Heart right ventricle (tissue), 16 donors: ENCODE measurements at regions of chr1 and their contacts with region 1.

Region 1: DNA sequence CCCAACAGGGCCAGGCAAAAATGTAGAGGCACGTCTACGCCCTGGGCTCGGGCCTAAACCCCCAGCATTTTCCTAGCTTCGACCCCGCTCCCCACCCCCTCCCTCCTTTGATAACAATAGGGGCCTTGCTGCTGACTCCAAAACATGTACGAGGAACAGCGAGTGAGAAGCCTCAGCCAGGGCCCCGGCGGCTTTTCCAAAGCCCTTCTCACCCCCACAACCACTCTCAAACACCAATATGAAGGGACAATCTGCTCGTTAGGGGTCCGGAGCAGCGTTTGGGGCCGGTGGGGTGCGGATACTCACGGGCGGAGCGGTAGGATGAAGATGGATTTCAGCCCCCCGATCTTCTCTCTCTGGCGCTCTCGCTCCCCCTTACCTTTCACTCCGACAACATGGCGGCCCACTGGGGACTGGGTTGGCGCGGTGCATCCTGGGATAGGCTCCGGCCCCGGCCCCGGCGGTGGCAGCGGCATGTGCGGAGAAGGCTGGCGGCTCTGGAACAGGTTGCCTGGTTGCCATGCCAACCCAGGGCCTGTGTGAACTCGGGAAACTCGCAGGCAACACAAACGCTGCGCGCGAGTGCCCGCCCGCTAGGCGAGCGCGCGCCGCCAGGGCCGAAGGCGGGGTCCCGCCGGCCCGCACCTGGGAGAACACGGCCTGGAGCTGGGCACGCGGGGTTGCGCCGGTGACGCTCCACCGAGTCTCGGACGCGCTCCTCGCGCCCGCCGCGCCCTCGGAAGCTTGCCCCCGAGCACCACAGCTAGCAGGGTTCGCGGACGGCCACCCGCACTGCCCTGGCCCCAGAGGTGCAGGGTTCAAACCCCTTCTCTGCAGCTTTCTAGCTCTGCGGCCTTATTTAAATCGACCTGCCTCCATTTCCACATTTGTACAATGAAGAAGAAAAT is at the start of gene PUM1:
- DNase-seq: peak; percentile 96 to 97
- ATAC-seq: peak; percentile 99 to 100 (median 100)
- H3K4me3 ChIP-seq: peak within 1 kb of the TSS; percentile 46 to 78 (median 68)
- H3K27ac ChIP-seq: peak within 1 kb of the TSS; percentile 79 to 97 (median 91)
- H3K4me1 ChIP-seq: peaks cover 0 to 38% (median 35%) of the 10 kb centered on the region in 9 donors
- H3K27me3 ChIP-seq: no peaks in the 10 kb centered on the region
- CTCF ChIP-seq: peak in 3 of 9 donors; percentile 7 to 19 (median 18)
- total RNA-seq, gene PUM1: 69.7 to 91.2 (median 82.9) TPM

Region 2: GRCh38 chr1:30966690-30967369 is 98.7 kb before region 1 on chr1:
- intact Hi-C with region 1: loop called in 4 of 10 experiments (anchors 10 kb)
- DNase-seq: no peak
- ATAC-seq: peak in 5 of 8 donors; percentile 30 to 46 (median 41)
- H3K4me3 ChIP-seq: no peak overlapping the region
- H3K27ac ChIP-seq: peak overlapping the region in 5 of 10 donors; percentile 68 to 82 (median 75)
- H3K4me1 ChIP-seq: peaks cover 8 to 64% (median 47%) of the 10 kb centered on the region in 9 donors
- H3K27me3 ChIP-seq: no peaks in the 10 kb centered on the region
- CTCF ChIP-seq: no peak

Region 3: DNA sequence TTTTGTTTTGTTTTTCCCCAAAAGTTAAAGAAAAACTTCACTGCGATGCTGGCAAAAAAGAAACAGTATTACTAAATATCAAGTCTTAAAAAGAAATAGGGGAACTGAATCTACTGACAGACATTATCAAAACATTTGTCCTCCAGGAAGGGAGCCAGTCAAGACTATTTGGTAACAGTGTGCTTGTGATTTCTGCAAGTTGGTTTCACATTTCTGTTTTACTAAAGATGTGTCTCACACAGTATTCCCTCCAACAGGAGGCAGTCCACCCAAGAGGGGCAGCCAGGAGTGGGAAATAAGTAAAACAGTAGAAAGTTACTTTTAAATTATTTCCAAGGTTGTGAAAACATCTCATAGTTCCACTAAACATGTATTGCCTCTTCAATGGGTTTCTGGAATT is 82.6 kb before region 1 on chr1:
- intact Hi-C with region 1: loop called in 1 of 10 experiments (anchors 10 kb)
- DNase-seq: no peak
- ATAC-seq: peak in 6 of 8 donors; percentile 32 to 66 (median 49)
- H3K4me3 ChIP-seq: no peak overlapping the region
- H3K27ac ChIP-seq: peak overlapping the region in 4 of 10 donors; percentile 7 to 83 (median 22)
- H3K4me1 ChIP-seq: peaks cover 4 to 59% (median 53%) of the 10 kb centered on the region in 9 donors
- H3K27me3 ChIP-seq: no peaks in the 10 kb centered on the region
- CTCF ChIP-seq: peak in 4 of 9 donors; percentile 11 to 27 (median 18)

Region 4: DNA sequence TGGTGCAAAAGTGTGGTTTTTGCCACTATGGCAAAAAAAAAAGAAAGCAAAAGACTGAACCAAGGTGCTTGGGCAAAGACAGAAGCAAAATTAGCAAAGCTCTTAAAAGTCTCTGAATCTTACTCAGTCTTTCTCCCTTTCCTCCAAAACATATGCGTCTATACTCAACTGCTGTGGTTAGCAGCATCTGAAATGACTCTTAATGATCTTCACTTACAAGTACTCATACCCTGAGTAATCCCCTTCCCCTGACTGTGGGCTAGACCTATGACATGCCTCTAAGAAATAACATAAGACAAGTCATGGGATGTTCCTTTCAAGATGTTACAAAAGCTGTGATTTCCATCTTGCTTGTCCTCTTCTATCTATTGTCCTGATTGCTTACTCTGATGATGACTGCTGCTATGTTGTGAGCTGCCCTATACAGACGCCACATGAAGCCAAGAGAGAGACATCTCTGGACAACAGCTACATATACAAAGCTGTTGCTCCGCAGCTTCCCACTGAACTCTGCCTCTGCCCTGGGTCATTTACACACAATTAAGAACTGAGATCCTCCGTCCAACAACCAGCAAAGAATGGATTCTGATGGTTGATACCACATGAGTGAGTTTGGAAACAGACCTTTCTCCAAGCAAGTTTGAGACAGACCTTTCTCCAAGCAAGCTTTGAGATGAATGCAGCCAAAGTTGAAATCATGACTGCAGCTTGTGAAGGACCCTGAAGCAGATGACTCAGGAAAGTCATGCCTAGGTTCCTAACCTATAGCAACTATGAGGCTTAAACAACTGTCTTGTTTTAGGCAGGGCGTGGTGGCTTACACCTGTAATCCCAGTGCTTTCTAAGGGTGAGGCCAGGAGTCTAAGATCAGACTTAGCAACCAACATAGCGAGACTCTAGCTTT is 55.2 kb before region 1 on chr1:
- intact Hi-C with region 1: loop called in 1 of 10 experiments (anchors 10 kb)
- DNase-seq: no peak
- ATAC-seq: peak in 2 of 8 donors; percentile 27 to 29
- H3K4me3 ChIP-seq: no peak overlapping the region
- H3K27ac ChIP-seq: no peak overlapping the region
- H3K4me1 ChIP-seq: peaks cover 13 to 90% (median 69%) of the 10 kb centered on the region in 9 donors
- H3K27me3 ChIP-seq: no peaks in the 10 kb centered on the region
- CTCF ChIP-seq: no peak